Ascending aorta (tissue), 2 donors: ENCODE measurements at regions of chr11 and their contacts with region 1.

Region 1: GRCh38 chr11:61138940-61139339 is 22.3 kb downstream of the VPS37C start:
- DNase-seq: no peak
- H3K4me3 ChIP-seq: no peak overlapping the region
- H3K27ac ChIP-seq: peak overlapping the region in 1 of 2 donors; percentile 39
- H3K4me1 ChIP-seq: peaks cover 5 to 28% of the 10 kb centered on the region in 2 donors
- H3K27me3 ChIP-seq: no peaks in the 10 kb centered on the region
- CTCF ChIP-seq: no peak

Region 2: GRCh38 chr11:60810569-60810968 is 328.4 kb before region 1 on chr11:
- intact Hi-C with region 1: no loop called
- DNase-seq: no peak
- H3K4me3 ChIP-seq: no peak overlapping the region
- H3K27ac ChIP-seq: no peak overlapping the region
- H3K4me1 ChIP-seq: no peaks in the 10 kb centered on the region
- H3K27me3 ChIP-seq: no peaks in the 10 kb centered on the region
- CTCF ChIP-seq: no peak

Region 3: DNA sequence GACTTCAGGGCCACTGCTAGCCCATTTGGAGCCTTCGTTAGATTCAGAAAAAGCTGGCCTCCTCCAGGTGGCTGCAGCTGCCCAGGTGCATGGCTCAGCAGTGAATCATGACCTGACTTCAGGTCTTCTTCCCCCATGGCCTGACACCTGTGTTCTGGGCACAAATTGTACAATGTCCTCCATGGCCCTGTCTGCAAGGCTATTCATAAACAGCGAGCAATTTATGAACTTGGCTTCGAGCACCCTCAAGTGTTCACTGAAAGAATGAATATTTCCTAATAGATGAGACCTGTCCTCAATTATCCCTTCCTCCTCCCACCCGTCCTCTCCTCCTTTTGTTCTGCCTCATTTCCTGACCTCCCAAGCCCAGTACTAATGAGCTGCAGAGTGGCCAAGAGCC is 34.5 kb after region 1 on chr11:
- intact Hi-C with region 1: loop called (anchors 5 kb)
- DNase-seq: peak in 1 of 2 donors; percentile 25
- H3K4me3 ChIP-seq: no peak overlapping the region
- H3K27ac ChIP-seq: no peak overlapping the region
- H3K4me1 ChIP-seq: no peaks in the 10 kb centered on the region
- H3K27me3 ChIP-seq: no peaks in the 10 kb centered on the region
- CTCF ChIP-seq: no peak